ENCODE measurements at regions of chrX and their contacts with region 1.

Region 1: DNA sequence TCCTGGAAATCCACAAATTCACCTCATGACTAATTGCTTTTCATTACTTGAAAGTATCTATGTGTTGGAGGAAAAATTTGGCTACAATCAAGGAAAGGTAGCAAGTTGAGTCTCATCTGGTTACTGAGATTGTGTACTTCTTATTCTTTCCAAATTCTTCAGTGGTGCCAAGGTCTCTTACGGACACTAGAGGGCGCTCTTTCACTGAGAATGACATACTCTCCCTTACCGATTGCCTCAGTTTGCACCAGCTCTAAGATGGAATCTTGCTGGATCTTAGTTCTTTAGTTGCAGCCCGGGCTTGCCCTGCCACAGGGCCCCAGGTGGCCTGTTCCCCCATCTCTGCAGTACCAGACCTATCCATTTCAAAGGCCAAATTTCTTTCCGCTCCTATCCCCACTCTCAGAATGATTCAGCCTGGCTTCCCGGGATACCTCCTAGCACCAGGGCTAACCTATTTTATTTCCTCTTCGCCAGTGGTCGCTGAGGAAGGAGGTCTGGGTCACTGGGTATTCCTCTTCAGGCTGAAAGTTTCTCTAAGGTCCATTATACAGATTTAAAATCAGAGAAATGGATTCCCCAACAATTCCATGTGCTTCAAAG is 24.6 kb upstream of the GPR50 start:
- DNase-seq: peak in 1 of 3 donors; percentile 36
- ATAC-seq: peak; percentile 69
- H3K4me3 ChIP-seq: no peak overlapping the region
- H3K4me1 ChIP-seq: no peaks in the 10 kb centered on the region
- CTCF ChIP-seq: peak; percentile 16

Region 2: GRCh38 chrX:151680805-151681204 is 529.0 kb after region 1 on chrX:
- intact Hi-C with region 1: loop called (anchors 5 to 10 kb)
- DNase-seq: peak in 2 of 3 donors; percentile 33 to 64
- ATAC-seq: peak; percentile 65
- H3K4me3 ChIP-seq: no peak overlapping the region
- H3K4me1 ChIP-seq: no peaks in the 10 kb centered on the region
- CTCF ChIP-seq: no peak